Right ventricle myocardium superior (tissue), 1 donor: ENCODE measurements at regions of chr12 and their contacts with region 1.

Region 1: DNA sequence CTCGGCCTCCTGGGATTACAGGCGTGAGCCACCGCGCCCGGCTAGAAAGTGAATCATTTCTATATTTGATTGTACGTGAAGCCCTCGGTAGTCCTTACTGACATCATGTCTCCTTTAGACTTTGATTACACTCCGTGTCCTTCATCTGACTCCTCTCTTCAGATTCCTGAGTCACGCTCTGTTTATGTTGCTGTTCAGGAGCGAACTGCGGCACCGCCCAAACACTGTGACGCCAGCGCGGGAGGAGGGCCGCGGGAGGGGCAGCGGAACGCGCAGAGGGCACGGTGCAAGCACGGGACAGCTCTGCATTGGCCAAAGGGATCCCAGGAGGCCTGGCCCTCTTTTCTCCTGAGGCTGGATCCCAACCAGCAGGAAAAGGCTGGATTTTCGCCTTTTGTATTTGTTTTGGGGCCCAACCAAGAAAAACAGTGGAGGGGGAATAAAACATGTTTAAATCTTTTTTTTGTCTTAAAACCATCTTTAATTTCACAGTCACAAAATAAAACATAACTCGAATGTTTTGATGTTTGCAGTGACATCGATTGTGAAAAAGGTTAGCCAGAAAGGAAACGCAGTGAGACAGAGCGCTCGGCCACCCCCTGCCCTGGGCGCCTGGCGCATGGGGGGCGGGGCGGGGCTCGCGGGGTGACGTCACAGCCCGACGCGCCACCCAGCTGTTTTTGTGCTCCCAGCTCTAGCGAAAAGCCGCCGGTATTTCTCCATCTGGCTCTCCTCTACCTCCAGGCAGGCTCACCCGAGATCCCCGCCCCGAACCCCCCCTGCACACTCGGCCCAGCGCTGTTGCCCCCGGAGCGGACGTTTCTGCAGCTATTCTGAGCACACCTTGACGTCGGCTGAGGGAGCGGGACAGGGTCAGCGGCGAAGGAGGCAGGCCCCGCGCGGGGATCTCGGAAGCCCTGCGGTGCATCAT is at the start of gene GABARAPL1:
- DNase-seq: peak; percentile 98
- ATAC-seq: peak; percentile 93
- total RNA-seq, gene GABARAPL1: 278 TPM

Region 2: GRCh38 chr12:10182354-10183061 is 30.0 kb before region 1 on chr12:
- intact Hi-C with region 1: no loop called
- DNase-seq: no peak
- ATAC-seq: no peak

Region 3: GRCh38 chr12:10364815-10365622 is 152.6 kb after region 1 on chr12:
- intact Hi-C with region 1: loop called (anchors 10 kb)
- DNase-seq: peak; percentile 47
- ATAC-seq: peak; percentile 89

Region 4: GRCh38 chr12:10721651-10722501 is 509.4 kb after region 1 on chr12:
- intact Hi-C with region 1: loop called (anchors 10 kb)
- DNase-seq: peak; percentile 90
- ATAC-seq: peak; percentile 88